ENCODE measurements at regions of chr1 and their contacts with region 1.

Region 1: GRCh38 chr1:225627304-225627947 is 25.5 kb downstream of the ENAH start:
- DNase-seq: no peak
- ATAC-seq: no peak
- H3K4me3 Mint-ChIP-seq: no peak overlapping the region
- H3K27ac Mint-ChIP-seq: no peak overlapping the region
- H3K4me1 Mint-ChIP-seq: no peaks in the 10 kb centered on the region
- H3K27me3 Mint-ChIP-seq: peaks cover 2% of the 10 kb centered on the region

Region 2: GRCh38 chr1:225744745-225745144 is 117.3 kb after region 1 on chr1:
- CTCF ChIA-PET with region 1: no interaction called
- POLR2A ChIA-PET with region 1: interaction called, 11 read pairs
- intact Hi-C with region 1: no loop called
- DNase-seq: no peak
- ATAC-seq: no peak
- H3K4me3 Mint-ChIP-seq: no peak overlapping the region
- H3K27ac Mint-ChIP-seq: no peak overlapping the region
- H3K4me1 Mint-ChIP-seq: no peaks in the 10 kb centered on the region
- H3K27me3 Mint-ChIP-seq: no peaks in the 10 kb centered on the region